ENCODE measurements at regions of chr2 and their contacts with region 1.

Region 1: GRCh38 chr2:216328347-216328746 is 43.9 kb downstream of the MARCHF4 start:
- DNase-seq: no peak
- ATAC-seq: peak; percentile 51; the same call in 1 of the 2 replicates
- H3K4me3 ChIP-seq: no peak overlapping the region
- H3K27ac ChIP-seq: no peak overlapping the region
- H3K4me1 ChIP-seq: no peaks in the 10 kb centered on the region
- H3K27me3 ChIP-seq: no peaks in the 10 kb centered on the region
- CTCF ChIP-seq: peak; percentile 54
- POLR2A ChIP-seq: no peak
- RAD21 ChIP-seq: peak; percentile 56

Region 2: DNA sequence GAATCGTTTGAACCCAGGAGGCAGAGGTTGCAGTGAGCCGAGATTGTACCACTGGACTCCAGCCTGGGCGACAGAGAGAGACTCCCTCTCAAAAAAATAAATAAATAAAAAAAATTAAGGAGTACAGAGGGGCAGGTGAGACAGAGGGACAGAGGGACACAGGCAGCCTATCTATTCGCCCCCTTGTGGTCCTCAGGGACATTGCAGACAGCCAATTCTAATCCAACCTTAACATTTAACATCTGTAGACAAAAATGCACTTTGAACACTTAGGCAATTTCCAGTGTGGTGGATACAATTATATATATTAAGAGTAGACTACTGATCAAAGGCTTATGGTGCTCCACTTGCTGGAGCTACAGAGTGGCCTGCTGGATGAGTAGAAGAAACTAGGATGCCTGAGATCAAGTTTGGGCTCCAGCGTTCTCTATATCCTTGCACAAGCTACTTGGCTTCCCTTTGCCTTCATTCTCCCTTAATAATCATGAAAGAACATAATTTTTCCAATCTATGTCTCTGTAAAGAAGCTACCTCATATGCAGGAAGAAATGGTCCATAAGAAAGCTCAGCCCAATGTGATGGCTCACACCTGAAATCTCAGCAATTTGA is 75.8 kb after region 1 on chr2:
- CTCF ChIA-PET with region 1: no interaction called
- POLR2A ChIA-PET with region 1: no interaction called
- dilution Hi-C with region 1: no loop called
- in situ Hi-C with region 1: no loop called
- intact Hi-C with region 1: loop called (anchors 5 kb)
- DNase-seq: peak; percentile 37
- ATAC-seq: peak; percentile 91
- H3K4me3 ChIP-seq: no peak overlapping the region
- H3K27ac ChIP-seq: no peak overlapping the region
- H3K4me1 ChIP-seq: no peaks in the 10 kb centered on the region
- H3K27me3 ChIP-seq: no peaks in the 10 kb centered on the region; the same call in 1 of the 2 replicates
- CTCF ChIP-seq: peak; percentile 76
- POLR2A ChIP-seq: no peak
- RAD21 ChIP-seq: peak; percentile 82

Measured in IMR-90 (cell line).